ENCODE measurements at regions of chr2 and their contacts with region 1.

Region 1: DNA sequence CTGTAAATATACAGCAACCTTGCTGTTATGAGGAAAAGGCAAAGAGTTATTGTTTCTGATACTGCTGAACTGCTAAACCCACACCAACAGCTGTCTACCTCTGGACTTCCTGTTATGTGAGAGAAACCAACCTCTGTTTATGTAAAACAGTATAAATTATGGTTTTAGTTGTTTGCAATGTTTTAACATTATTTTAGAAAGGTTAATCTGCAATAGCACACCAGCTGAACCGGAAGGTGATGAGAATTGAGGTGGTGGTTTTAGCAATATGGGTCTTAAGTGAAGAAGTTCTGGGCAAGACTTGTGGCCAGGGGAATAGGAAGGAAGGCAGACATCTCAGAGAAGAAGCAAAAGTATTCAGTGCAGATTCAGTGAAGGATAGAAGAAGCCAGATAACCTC is 237.8 kb downstream of the PLCL1 start:
- DNase-seq: peak in 4 of 5 donors; percentile 18 to 35 (median 28)
- H3K4me3 ChIP-seq: no peak overlapping the region
- H3K4me3 Mint-ChIP-seq: no peak overlapping the region
- H3K27ac ChIP-seq: no peak overlapping the region
- H3K27ac Mint-ChIP-seq: no peak overlapping the region
- H3K4me1 ChIP-seq: peaks cover 31% of the 10 kb centered on the region
- H3K4me1 Mint-ChIP-seq: peaks cover 10 to 21% (median 14%) of the 10 kb centered on the region in 4 donors
- H3K27me3 ChIP-seq: no peaks in the 10 kb centered on the region
- H3K27me3 Mint-ChIP-seq: no peaks in the 10 kb centered on the region

Region 2: GRCh38 chr2:198004921-198005829 is 37.0 kb before region 1 on chr2:
- CTCF ChIA-PET with region 1: no interaction called
- POLR2A ChIA-PET with region 1: no interaction called
- intact Hi-C with region 1: loop called (anchors 5 kb)
- DNase-seq: peak; percentile 12 to 55 (median 31)
- H3K4me3 ChIP-seq: no peak overlapping the region
- H3K4me3 Mint-ChIP-seq: peak overlapping the region; percentile 70 to 86 (median 80)
- H3K27ac ChIP-seq: peak overlapping the region; percentile 30
- H3K27ac Mint-ChIP-seq: peak overlapping the region; percentile 71 to 93 (median 90)
- H3K4me1 ChIP-seq: peaks cover 36% of the 10 kb centered on the region
- H3K4me1 Mint-ChIP-seq: peaks cover 30 to 50% (median 44%) of the 10 kb centered on the region in 4 donors
- H3K27me3 ChIP-seq: no peaks in the 10 kb centered on the region
- H3K27me3 Mint-ChIP-seq: no peaks in the 10 kb centered on the region